ENCODE measurements at regions of chr1 and their contacts with region 1.

Region 1: DNA sequence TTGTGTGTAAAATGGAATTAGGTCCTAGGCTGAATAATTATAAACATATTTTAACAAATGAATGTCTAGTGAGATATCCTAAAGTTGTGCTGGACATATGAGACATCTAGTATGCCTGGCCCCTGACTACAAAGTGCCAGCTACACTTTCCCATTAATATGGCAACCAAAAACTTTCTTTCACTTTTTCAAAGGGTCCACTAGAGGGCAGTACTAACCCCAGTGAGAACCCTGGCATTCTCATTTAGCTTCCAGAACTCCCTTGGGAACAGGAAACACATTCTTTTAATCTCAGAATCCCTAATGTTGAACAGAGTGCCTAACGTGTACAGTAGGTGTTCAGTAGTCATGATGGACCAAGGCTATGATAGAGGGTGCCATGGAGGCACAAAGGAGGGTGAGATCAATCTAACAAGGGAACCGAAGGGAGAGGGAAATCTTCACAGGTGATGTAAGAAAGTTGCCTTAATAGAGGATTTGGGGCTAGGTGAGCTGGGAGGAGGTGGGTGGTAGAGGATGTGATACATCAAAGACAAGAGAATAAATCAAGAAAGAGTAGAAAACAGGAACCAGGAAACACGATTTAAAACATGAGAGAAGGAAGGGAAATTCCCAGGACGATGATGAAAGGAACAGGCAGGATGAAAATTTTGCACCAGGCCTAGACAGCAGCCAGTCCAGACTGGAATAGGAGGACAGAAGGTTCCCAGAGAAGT is 41.6 kb downstream of the NSL1 start:
- DNase-seq: peak; percentile 65
- H3K4me3 ChIP-seq: peak overlapping the region in 1 of 2 experiments; percentile 9; a peak in 1 of 4 replicates
- H3K27ac ChIP-seq: no peak overlapping the region
- H3K4me1 ChIP-seq: peaks cover 11 to 13% of the 10 kb centered on the region in 2 experiments; a peak in 3 of 4 replicates
- H3K27me3 ChIP-seq: no peaks in the 10 kb centered on the region
- CTCF ChIP-seq: peak; percentile 86
- EP300 ChIP-seq: no peak
- RAD21 ChIP-seq: peak; percentile 66

Region 2: DNA sequence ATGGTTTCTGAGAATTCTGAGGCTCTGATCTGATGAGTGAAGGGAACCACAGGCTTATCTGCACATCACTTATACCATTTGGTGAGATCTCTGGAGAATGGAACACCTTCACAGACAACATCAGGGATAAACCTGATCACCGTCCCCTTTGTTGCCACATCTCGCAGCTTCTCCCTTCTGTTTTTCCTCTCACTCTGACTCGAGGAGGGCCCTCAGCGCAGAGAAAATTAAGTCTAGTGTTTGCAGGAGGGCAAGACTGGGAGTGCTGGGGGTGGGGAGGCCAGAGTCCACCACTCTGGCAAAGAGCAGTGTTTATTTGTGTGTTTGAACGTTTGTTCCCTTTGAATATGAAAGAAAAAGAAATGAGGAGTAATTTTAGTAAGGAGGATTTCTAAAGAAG is 21.4 kb before region 1 on chr1:
- CTCF ChIA-PET with region 1: interaction called, 24 read pairs
- POLR2A ChIA-PET with region 1: no interaction called
- DNase-seq: no peak
- H3K4me3 ChIP-seq: no peak overlapping the region
- H3K27ac ChIP-seq: no peak overlapping the region
- H3K4me1 ChIP-seq: no peaks in the 10 kb centered on the region
- H3K27me3 ChIP-seq: no peaks in the 10 kb centered on the region
- CTCF ChIP-seq: no peak
- EP300 ChIP-seq: no peak
- RAD21 ChIP-seq: no peak

Region 3: DNA sequence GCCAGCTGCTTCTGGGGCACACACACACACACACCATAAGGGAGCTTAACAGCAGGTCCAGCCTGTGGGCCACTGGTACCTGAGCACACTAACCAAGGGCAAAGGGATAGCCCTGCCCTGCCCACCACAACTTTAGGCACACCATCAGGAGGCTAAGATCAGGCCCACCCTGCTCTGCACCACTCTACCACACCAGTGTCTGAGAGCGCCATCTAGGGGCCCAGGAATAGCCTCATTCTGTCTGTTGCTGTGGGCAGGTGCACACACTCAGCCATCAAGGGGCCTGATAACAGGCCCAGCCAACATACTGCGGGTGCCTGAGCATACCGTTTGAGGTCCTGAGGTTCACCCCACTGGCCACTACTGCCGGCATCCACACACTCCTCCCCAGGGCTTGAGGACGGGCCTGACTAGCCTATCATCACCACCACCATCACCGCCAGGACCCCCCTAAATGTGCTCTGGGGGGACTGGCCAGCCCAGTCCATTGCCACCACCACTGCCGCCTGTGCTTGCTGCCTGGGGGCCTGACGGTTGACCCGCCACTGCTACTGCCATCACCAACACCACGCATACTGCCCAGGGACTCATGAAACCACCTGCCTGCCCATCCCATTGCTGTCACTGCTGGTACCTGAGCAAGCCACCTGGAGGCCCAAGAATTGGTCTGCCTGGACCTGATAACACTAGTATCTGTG is 10.3 kb after region 1 on chr1:
- CTCF ChIA-PET with region 1: interaction called, 17 read pairs
- POLR2A ChIA-PET with region 1: no interaction called
- DNase-seq: no peak
- H3K4me3 ChIP-seq: no peak overlapping the region
- H3K27ac ChIP-seq: no peak overlapping the region
- H3K4me1 ChIP-seq: no peaks in the 10 kb centered on the region; a peak in 1 of 4 replicates
- H3K27me3 ChIP-seq: no peaks in the 10 kb centered on the region
- CTCF ChIP-seq: peak; percentile 47
- EP300 ChIP-seq: no peak
- RAD21 ChIP-seq: no peak

Region 4: DNA sequence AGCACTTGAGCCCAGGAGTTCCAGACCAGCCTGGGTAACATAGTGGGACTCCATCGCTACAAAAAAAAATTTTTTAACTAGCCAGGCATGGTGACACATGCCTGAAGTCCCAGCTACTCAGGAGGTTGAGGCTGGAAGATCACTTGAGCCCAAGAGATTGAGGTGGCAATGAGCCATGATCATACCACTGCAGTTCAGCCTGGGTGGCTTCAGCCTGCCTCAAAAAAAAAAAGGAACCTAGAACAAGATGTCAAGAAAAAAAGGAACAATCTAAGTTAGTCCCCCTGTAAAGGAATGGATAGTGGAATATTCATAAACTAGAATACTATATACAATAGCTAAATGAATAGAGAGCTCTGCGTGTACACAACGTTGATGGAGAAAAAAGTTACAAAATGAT is 27.2 kb after region 1 on chr1:
- CTCF ChIA-PET with region 1: interaction called, 17 read pairs
- POLR2A ChIA-PET with region 1: no interaction called
- DNase-seq: no peak
- H3K4me3 ChIP-seq: no peak overlapping the region
- H3K27ac ChIP-seq: no peak overlapping the region
- H3K4me1 ChIP-seq: no peaks in the 10 kb centered on the region
- H3K27me3 ChIP-seq: no peaks in the 10 kb centered on the region
- CTCF ChIP-seq: no peak
- EP300 ChIP-seq: no peak
- RAD21 ChIP-seq: no peak

Region 5: GRCh38 chr1:212791676-212792395 is 41.9 kb after region 1 on chr1 and contains the starts of genes NSL1 and TATDN3:
- CTCF ChIA-PET with region 1: interaction called, 10 read pairs
- POLR2A ChIA-PET with region 1: no interaction called
- DNase-seq: peak; percentile 85
- H3K4me3 ChIP-seq: peak within 1 kb of the TSS; percentile 77 to 98
- H3K27ac ChIP-seq: peak within 1 kb of the TSS; percentile 86 to 88
- H3K4me1 ChIP-seq: peaks cover 2 to 3% of the 10 kb centered on the region in 2 experiments; a peak in 2 of 4 replicates
- H3K27me3 ChIP-seq: no peaks in the 10 kb centered on the region
- CTCF ChIP-seq: no peak
- EP300 ChIP-seq: peak in 1 of 2 experiments; percentile 46; a peak in 1 of 4 replicates
- RAD21 ChIP-seq: 0 out of 2 replicates have a peak, but pooled peaks have one; percentile 7
- polyA plus RNA-seq, gene NSL1: 17.8 and 22.5 TPM in 2 replicates
- polyA plus RNA-seq, gene TATDN3: 5.2 and 6.6 TPM in 2 replicates

Measured in SK-N-SH (cell line).